A673 (cell line): ENCODE measurements at regions of chr10 and their contacts with region 1.

Region 1: GRCh38 chr10:84335516-84335915 is 7.1 kb downstream of the CCSER2 start:
- DNase-seq: no peak
- H3K4me3 ChIP-seq: no peak overlapping the region
- H3K27ac ChIP-seq: no peak overlapping the region
- H3K4me1 ChIP-seq: peaks cover 10% of the 10 kb centered on the region
- H3K27me3 ChIP-seq: no peaks in the 10 kb centered on the region
- CTCF ChIP-seq: no peak

Region 2: DNA sequence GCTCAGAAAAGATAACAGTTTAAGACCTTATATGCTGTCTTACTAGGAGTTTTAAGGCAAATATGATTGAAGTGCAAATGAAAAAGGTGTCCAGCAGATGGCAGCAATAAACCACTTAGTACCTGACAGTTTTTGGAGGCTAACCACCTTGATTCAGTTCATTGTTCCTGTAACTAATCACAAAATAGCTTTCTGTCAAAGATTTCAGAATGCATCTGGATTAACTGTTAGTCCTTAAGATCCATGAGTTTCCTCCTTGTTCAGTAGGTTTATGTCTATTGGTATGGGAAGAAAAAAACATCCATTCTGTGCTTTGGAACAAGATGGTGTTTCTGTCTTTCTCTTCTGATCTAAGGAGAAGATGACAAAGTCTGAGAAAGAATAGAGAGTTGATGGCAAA is 39.5 kb after region 1 on chr10:
- CTCF ChIA-PET with region 1: no interaction called
- POLR2A ChIA-PET with region 1: no interaction called
- intact Hi-C with region 1: no loop called
- DNase-seq: peak; percentile 55
- H3K4me3 ChIP-seq: no peak overlapping the region
- H3K27ac ChIP-seq: no peak overlapping the region
- H3K4me1 ChIP-seq: no peaks in the 10 kb centered on the region
- H3K27me3 ChIP-seq: no peaks in the 10 kb centered on the region
- CTCF ChIP-seq: peak; percentile 80

Region 3: DNA sequence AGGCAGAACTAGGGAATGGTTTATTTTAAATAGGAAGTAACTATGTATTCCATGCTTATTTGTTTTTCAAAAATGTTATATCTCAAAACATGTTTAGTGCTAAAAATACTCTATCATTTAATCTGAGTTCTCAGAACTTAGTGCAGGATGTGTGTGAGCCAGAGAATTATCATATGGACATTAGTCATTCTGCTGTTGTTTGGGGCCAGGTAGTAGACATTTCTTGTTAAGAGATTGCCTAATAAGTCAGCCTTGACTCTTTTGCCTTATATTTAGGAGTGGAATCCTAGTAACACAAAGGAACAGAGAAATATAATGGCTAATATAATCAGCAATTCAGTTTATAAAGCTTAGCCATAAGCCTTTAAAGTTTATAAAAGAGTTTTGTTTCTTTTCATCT is 142.6 kb after region 1 on chr10:
- CTCF ChIA-PET with region 1: no interaction called
- POLR2A ChIA-PET with region 1: interaction called, 10 read pairs
- intact Hi-C with region 1: no loop called
- DNase-seq: no peak
- H3K4me3 ChIP-seq: no peak overlapping the region
- H3K27ac ChIP-seq: no peak overlapping the region
- H3K4me1 ChIP-seq: no peaks in the 10 kb centered on the region
- H3K27me3 ChIP-seq: no peaks in the 10 kb centered on the region
- CTCF ChIP-seq: no peak

Region 4: GRCh38 chr10:84522612-84523462 is 187.3 kb after region 1 on chr10:
- CTCF ChIA-PET with region 1: no interaction called
- POLR2A ChIA-PET with region 1: no interaction called
- intact Hi-C with region 1: no loop called
- DNase-seq: no peak
- H3K4me3 ChIP-seq: no peak overlapping the region
- H3K27ac ChIP-seq: no peak overlapping the region
- H3K4me1 ChIP-seq: no peaks in the 10 kb centered on the region
- H3K27me3 ChIP-seq: no peaks in the 10 kb centered on the region
- CTCF ChIP-seq: no peak

Region 5: DNA sequence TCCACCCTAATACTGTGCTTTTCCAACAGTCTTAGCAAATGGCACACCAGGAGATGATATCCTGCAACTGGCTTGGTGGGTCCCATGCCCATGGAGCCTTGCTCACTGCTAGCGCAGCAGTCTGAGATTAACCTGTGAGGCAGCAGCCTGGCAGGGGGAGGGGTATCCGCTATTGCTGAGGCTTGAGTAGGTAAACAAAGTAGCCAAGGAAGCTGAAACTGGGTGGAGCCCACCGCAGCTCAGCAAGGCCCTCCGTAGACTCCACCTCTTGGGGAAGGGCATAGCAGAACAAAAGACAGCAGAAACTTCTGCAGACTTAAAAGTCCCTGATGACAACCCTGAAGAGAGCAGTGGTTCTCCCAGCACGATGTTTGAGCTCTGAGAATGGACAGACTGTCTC is 391.9 kb after region 1 on chr10:
- CTCF ChIA-PET with region 1: no interaction called
- POLR2A ChIA-PET with region 1: no interaction called
- intact Hi-C with region 1: no loop called
- DNase-seq: no peak
- H3K4me3 ChIP-seq: no peak overlapping the region
- H3K27ac ChIP-seq: no peak overlapping the region
- H3K4me1 ChIP-seq: no peaks in the 10 kb centered on the region
- H3K27me3 ChIP-seq: peaks cover 7% of the 10 kb centered on the region
- CTCF ChIP-seq: no peak

Region 6: DNA sequence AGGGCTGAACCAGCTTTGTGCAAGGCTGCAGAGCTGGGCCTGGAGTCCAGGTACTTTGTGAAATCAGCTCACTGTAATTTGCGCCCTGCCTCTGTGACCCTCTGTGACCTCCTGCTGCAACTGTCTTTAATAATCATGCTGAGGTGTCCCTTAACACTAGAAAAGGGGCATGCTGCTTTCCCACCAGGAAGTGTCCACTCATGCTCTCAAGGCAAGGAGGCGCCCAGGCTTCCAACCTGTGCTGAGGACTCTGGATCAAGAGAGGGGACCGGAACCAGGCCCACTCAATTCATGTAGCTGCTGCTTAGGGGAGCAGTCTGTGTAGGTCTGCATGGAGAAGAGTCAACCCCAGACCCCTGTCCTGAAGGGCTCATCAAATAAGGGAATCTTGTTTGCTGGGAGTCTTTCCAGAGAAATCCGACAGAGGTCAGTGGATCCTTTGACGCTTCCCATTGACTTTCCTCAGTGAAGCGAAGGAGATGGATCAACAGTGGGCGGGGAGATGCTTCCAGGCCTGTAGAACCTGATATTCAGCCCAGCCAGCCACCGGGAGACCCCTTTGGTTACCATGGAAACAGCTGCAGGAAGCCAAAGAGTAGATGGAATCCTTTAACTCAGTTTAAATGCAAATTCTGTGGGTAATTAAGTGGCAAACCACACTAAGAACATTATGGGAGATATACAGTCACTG is 1085.1 kb after region 1 on chr10:
- CTCF ChIA-PET with region 1: no interaction called
- POLR2A ChIA-PET with region 1: no interaction called
- intact Hi-C with region 1: no loop called
- DNase-seq: no peak
- H3K4me3 ChIP-seq: no peak overlapping the region
- H3K27ac ChIP-seq: no peak overlapping the region
- H3K4me1 ChIP-seq: no peaks in the 10 kb centered on the region
- H3K27me3 ChIP-seq: no peaks in the 10 kb centered on the region
- CTCF ChIP-seq: no peak